ENCODE measurements at regions of chr1 and their contacts with region 1.

Region 1: DNA sequence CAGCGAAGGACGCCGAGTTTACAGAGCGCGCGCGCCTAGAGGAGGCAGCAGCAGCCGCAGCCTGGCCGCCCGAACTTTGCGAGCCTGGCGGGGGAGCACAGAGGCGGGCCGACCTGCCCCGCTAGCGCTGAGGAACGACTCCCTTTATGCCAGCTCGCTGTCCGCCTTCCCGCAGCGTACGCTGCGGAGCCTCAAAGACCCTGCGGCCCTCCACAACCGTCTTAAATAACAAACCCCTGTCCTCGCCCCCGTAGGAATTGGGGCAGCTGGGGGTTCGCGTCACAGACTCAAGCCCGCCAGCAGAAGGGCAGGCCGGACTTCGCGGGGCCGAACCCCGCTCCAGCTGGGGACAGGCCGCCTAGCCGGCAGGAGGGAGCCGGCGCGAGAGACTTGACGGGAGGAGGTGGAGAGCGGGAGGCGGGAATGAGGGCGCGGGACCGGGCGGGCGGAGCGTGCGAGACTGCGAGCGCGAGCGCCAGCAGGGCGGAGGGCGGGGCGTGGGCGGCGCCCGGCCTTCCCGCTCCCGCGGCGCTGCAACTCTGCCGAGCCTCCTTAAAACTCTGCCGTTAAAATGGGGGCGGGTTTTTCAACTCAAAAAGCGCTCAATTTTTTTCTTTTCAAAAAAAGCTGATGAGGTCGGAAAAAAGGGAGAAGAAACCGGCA is 1.8 kb upstream of the CDKN2C start:
- DNase-seq: peak; percentile 87
- H3K4me3 Mint-ChIP-seq: peak overlapping the region; percentile 90
- H3K27ac Mint-ChIP-seq: peak overlapping the region; percentile 96
- H3K4me1 Mint-ChIP-seq: peaks cover 21% of the 10 kb centered on the region
- H3K27me3 Mint-ChIP-seq: peaks cover 11% of the 10 kb centered on the region

Region 2: GRCh38 chr1:50422946-50423669 is 545.2 kb before region 1 on chr1 and contains the start of gene DMRTA2:
- CTCF ChIA-PET with region 1: interaction called, 3 read pairs
- intact Hi-C with region 1: loop called (anchors 5 kb)
- DNase-seq: no peak
- H3K4me3 Mint-ChIP-seq: peak within 1 kb of the TSS; percentile 80
- H3K27ac Mint-ChIP-seq: peak within 1 kb of the TSS; percentile 47
- H3K4me1 Mint-ChIP-seq: peaks cover 58% of the 10 kb centered on the region
- H3K27me3 Mint-ChIP-seq: peaks cover 77% of the 10 kb centered on the region
- total RNA-seq, gene DMRTA2: 0.07 TPM in 1 of 2 experiments, not detected in the other

Region 3: DNA sequence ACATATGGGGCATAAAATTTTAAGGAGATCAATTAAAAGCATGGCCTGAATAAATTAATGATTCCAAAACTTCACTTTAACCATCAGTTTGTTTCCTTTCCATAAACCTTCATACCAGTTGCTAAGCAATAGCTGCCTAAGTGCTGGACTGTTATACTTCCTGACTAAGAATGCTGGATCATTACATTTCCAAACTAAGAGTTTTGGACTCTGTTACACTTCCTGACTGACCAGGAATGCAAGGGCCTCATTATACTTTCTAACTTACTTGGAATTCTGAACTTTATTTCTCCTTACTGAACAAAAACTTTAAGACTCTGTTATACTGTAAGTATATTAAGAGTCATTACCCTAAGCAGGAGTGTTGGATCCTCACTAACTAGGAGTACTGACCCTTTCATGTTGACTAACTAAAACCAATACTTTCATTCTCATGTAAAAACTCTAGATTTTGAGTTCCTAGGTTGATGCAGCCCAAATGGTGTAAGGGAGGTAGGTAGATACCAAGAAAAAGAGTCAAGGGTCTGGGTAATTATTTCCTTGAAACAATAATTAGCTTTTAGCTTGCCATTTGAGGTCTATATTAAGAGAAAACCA is 126.4 kb before region 1 on chr1:
- CTCF ChIA-PET with region 1: no interaction called
- intact Hi-C with region 1: no loop called
- DNase-seq: no peak
- H3K4me3 Mint-ChIP-seq: no peak overlapping the region
- H3K27ac Mint-ChIP-seq: no peak overlapping the region
- H3K4me1 Mint-ChIP-seq: peaks cover 11% of the 10 kb centered on the region
- H3K27me3 Mint-ChIP-seq: no peaks in the 10 kb centered on the region

Region 4: DNA sequence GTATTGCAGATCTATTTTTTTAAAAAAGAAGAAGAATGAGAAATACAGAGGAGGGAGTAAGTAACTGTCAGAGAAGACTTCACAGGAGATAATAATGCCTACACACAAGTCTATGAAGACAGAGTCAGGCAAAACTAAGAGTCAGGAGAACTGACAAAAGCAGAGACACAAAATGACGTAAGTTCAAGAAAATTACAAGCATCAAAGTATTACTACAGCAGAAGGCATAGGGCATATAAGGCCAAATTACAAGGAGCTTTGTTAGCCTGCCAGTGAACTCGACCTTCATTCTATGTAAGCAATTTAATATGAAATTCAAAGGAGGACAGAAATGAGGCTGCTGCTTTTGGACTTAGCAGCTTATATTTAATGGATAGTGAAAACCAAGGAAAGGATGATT is 32.0 kb before region 1 on chr1:
- CTCF ChIA-PET with region 1: no interaction called
- intact Hi-C with region 1: no loop called
- DNase-seq: no peak
- H3K4me3 Mint-ChIP-seq: no peak overlapping the region
- H3K27ac Mint-ChIP-seq: no peak overlapping the region
- H3K4me1 Mint-ChIP-seq: peaks cover 23% of the 10 kb centered on the region
- H3K27me3 Mint-ChIP-seq: no peaks in the 10 kb centered on the region

Region 5: GRCh38 chr1:50978144-50978851 is 10.0 kb after region 1 on chr1:
- CTCF ChIA-PET with region 1: interaction called, 5 read pairs
- intact Hi-C with region 1: loop called (anchors 1 kb)
- DNase-seq: peak; percentile 27
- H3K4me3 Mint-ChIP-seq: peak overlapping the region; percentile 62
- H3K27ac Mint-ChIP-seq: no peak overlapping the region
- H3K4me1 Mint-ChIP-seq: peaks cover 18% of the 10 kb centered on the region
- H3K27me3 Mint-ChIP-seq: peaks cover 38% of the 10 kb centered on the region

Region 6: DNA sequence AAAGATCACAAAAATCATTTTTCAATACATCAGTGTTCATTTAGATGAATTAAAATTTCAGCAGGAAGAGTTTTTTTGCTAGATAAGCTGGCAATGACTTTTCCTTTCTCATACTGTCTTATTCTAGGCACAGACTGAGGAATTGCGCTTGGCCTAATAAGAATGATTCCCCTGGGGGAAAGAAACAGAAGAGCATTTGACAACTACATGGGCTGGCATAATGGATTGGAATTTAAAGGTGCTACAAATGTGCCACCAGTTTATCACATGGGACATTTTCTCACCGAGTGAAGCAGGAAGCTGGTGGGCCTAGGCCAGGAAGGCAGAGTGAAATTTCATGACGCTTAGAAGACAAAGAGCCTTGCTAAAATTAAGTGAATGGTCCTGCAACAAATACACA is 41.1 kb after region 1 on chr1:
- CTCF ChIA-PET with region 1: no interaction called
- intact Hi-C with region 1: no loop called
- DNase-seq: no peak
- H3K4me3 Mint-ChIP-seq: no peak overlapping the region
- H3K27ac Mint-ChIP-seq: no peak overlapping the region
- H3K4me1 Mint-ChIP-seq: no peaks in the 10 kb centered on the region
- H3K27me3 Mint-ChIP-seq: no peaks in the 10 kb centered on the region

Region 7: DNA sequence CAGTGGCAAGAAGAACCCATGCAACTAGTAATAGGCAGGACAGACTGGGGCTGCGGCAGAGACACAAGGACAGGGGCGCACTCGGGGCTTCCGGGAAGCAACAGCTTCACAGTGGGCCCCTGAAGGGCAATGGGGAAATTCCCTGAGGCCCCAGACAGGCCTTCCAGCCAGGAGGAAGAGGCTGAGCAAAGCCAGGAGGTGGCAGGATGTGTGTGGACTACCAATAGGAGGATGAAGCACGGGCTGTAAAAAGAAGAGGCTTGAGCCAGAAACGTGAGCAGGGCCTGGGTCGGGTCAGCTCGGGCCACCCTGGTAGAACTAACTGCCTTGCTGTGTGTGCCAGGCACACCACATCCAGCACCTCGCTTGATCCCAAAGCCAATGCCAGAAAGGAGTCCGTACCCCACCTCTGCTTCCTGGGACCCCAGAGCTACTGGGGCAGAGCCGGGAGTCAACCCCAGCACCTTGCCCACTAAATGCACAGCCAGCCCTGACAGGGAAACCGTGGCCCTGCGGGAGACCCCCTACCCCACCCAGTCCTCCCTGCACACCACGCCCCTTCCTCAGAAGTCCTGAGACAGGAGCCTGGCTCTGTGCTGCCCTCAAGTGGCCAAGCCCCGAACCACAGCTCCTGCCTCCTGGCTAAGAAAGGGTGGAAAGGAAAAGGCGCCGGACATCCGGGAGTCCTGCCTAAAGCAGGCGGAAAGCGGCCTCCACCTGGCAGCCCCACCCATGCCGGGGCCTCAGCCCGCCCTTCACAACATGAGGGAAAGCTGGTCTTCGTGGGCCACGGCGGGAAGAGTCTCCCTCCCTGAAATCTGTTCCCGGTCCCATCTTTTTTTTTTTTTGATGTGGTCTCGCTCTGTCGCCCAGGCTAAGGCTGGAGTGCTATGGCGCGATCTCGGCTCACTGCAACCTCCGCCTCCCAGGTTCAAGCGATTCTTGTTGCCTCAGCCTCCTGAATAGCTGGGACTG is 328.4 kb after region 1 on chr1:
- CTCF ChIA-PET with region 1: interaction called, 4 read pairs
- intact Hi-C with region 1: loop called (anchors 5 kb)
- DNase-seq: peak; percentile 86
- H3K4me3 Mint-ChIP-seq: peak overlapping the region; percentile 63
- H3K27ac Mint-ChIP-seq: no peak overlapping the region
- H3K4me1 Mint-ChIP-seq: peaks cover 6% of the 10 kb centered on the region
- H3K27me3 Mint-ChIP-seq: no peaks in the 10 kb centered on the region

Region 8: GRCh38 chr1:51616901-51617708 is 648.8 kb after region 1 on chr1 and contains the start of gene OSBPL9:
- CTCF ChIA-PET with region 1: no interaction called
- intact Hi-C with region 1: loop called (anchors 5 kb)
- DNase-seq: peak; percentile 94
- H3K4me3 Mint-ChIP-seq: peak within 1 kb of the TSS; percentile 98
- H3K27ac Mint-ChIP-seq: peak within 1 kb of the TSS; percentile 89
- H3K4me1 Mint-ChIP-seq: peaks cover 25% of the 10 kb centered on the region
- H3K27me3 Mint-ChIP-seq: no peaks in the 10 kb centered on the region
- total RNA-seq, gene OSBPL9: 38.2 to 40.7 TPM

Region 9: GRCh38 chr1:52552505-52553361 is 1584.4 kb after region 1 on chr1 and contains the start of gene TUT4:
- CTCF ChIA-PET with region 1: no interaction called
- intact Hi-C with region 1: loop called (anchors 5 kb)
- DNase-seq: peak; percentile 88
- H3K4me3 Mint-ChIP-seq: peak within 1 kb of the TSS; percentile 50
- H3K27ac Mint-ChIP-seq: no peak within 1 kb of the TSS
- H3K4me1 Mint-ChIP-seq: peaks cover 31% of the 10 kb centered on the region
- H3K27me3 Mint-ChIP-seq: no peaks in the 10 kb centered on the region
- total RNA-seq, gene TUT4: 48.1 to 51.2 TPM